Activated CD4-positive, alpha-beta T cell treated with anti-CD3 and anti-CD28 coated beads for 36 hours (primary cell): ENCODE measurements at regions of chr15 and their contacts with region 1.

Region 1: DNA sequence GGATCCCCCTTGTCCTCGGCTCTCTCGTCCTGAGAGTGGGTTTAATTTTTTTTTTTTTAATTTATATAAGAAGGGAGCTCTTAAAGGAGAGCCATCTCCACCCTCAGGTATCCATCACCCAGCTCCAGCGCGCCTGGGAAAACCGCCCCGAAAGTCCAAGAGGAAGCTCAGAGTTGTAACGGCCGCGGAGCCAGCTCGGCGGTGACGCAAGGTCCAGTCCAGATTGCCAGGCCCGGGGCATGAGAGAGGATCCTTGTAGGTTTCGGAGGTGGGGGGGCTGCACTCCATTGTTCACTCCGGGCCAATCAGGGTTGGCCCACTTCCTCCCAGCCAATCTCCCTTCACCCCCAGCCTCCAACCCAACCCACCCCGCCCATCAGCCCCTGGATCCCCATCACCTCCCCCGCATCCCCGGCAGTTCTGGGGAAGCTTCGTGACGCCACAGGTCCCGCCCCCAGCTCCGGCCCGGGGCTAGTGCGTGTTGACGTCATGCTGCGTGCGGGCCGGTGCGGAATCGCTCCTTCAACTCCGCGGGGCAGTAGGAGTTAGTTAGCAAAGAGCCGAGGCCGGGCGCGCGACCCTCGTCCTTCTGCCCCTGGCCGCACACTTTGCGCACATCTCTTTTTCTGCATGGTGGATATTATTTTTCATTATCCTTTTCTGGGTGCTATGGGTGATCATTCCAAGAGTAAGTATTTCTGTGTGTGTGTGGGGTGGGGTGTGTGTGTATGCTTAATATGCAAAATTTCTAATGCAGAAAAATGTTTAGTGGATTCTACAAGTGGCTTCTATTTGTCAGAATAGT is at the start of gene ISL2:
- DNase-seq: peak; percentile 88
- ATAC-seq: peak; percentile 47
- H3K4me3 Mint-ChIP-seq: peak within 1 kb of the TSS; percentile 67
- H3K27ac Mint-ChIP-seq: peak within 1 kb of the TSS; percentile 59
- H3K4me1 Mint-ChIP-seq: peaks cover 45% of the 10 kb centered on the region
- H3K27me3 Mint-ChIP-seq: peaks cover 61% of the 10 kb centered on the region
- total RNA-seq, gene ISL2: 0.25 TPM in 1 of 2 experiments, not detected in the other

Region 2: GRCh38 chr15:76190834-76191538 is 145.5 kb before region 1 on chr15:
- CTCF ChIA-PET with region 1: interaction called, 3 read pairs
- POLR2A ChIA-PET with region 1: no interaction called
- intact Hi-C with region 1: loop called (anchors 2 to 5 kb)
- DNase-seq: peak; percentile 88
- ATAC-seq: peak; percentile 98
- H3K4me3 Mint-ChIP-seq: no peak overlapping the region
- H3K27ac Mint-ChIP-seq: no peak overlapping the region
- H3K4me1 Mint-ChIP-seq: peaks cover 9% of the 10 kb centered on the region
- H3K27me3 Mint-ChIP-seq: peaks cover 41% of the 10 kb centered on the region

Region 3: DNA sequence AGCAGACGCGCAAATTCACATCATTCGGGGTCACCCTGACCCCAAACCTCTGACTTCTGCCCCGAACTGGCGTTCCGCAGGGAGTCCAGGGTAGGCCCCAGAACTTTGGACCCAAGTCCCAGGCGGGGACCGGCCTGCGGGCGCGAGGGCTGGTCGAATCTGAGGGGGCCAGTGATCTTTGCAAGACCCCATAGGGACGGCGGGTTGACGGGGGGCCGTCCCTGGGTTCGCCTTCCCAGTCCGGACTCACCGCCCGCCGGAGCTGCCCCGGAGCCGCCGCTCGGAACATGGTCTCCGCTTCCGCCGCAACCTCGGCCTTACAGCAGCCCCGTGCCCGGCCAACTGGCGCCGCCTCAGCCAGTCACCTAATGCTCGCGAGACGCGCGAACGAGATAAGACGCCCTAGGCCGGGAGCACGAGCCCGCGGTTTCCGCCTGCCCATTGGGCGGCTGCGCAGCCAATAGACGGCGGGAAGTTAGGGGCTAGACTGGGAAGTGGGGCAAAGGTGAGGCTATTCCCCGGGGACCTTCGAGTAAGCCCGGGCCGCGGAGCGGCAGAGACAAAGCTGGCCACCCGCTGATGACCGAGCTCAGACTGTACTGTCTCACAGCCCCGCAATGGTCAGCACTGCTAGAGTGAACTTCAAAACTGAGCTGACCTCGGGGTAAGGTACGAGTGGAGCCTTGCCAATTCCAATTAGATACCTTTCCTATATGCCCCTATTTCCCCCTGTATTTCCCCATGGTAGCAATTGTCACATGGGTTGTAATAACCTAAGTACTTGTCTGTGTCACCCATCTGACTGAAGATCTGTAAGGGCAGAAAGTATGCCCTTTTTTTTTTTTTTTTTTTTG is 25.1 kb before region 1 on chr15 and contains the start of gene ETFA:
- CTCF ChIA-PET with region 1: interaction called, 3 read pairs
- POLR2A ChIA-PET with region 1: no interaction called
- intact Hi-C with region 1: loop called in 1 of 2 experiments (anchors 1 kb)
- DNase-seq: peak; percentile 95
- ATAC-seq: peak; percentile 98
- H3K4me3 Mint-ChIP-seq: peak within 1 kb of the TSS; percentile 87
- H3K27ac Mint-ChIP-seq: peak within 1 kb of the TSS; percentile 69
- H3K4me1 Mint-ChIP-seq: peaks cover 28% of the 10 kb centered on the region
- H3K27me3 Mint-ChIP-seq: no peaks in the 10 kb centered on the region
- total RNA-seq, gene ETFA: 100 to 136 TPM